PC-3 (cell line): ENCODE measurements at regions of chr7 and their contacts with region 1.

Region 1: GRCh38 chr7:123929107-123929506 is 4.1 kb downstream of the SPAM1 start:
- DNase-seq: peak; percentile 95
- ATAC-seq: peak; percentile 96
- H3K4me3 ChIP-seq: no peak overlapping the region
- H3K27ac ChIP-seq: peak overlapping the region; percentile 55
- H3K4me1 ChIP-seq: peaks cover 14% of the 10 kb centered on the region
- H3K27me3 ChIP-seq: no peaks in the 10 kb centered on the region
- CTCF ChIP-seq: no peak

Region 2: GRCh38 chr7:123901044-123901443 is 28.1 kb before region 1 on chr7:
- CTCF ChIA-PET with region 1: no interaction called
- POLR2A ChIA-PET with region 1: no interaction called
- intact Hi-C with region 1: loop called (anchors 1 kb)
- DNase-seq: peak; percentile 69
- ATAC-seq: peak; percentile 97
- H3K4me3 ChIP-seq: no peak overlapping the region
- H3K27ac ChIP-seq: no peak overlapping the region
- H3K4me1 ChIP-seq: peaks cover 5% of the 10 kb centered on the region; the same call in 1 of the 2 replicates
- H3K27me3 ChIP-seq: no peaks in the 10 kb centered on the region
- CTCF ChIP-seq: no peak

Region 3: DNA sequence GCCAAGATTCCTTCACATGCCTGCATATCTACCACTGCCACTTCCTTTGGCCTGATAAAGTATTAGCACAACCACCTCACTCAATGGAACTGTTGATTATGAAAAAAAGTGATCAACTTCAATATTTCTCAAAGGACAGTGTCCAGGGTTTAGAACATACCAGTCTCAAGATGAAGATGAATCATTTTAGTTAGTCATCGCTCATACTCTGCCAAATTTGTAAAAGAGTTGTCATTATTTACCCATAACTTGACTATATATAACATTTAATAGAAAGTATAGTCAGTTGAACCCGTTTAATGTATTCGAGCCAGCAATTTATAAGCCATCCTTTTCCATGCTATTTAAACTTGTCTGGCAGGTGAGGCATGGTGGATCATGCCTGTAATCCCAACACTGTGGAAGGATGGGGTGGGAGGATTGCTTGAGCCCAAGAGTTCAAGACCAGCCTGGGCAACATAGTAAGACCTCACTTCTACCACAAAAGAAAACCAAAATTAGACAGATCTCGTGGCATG is 29.1 kb after region 1 on chr7:
- CTCF ChIA-PET with region 1: no interaction called
- POLR2A ChIA-PET with region 1: no interaction called
- intact Hi-C with region 1: loop called (anchors 2 kb)
- DNase-seq: peak; percentile 92
- ATAC-seq: peak; percentile 98
- H3K4me3 ChIP-seq: no peak overlapping the region
- H3K27ac ChIP-seq: peak overlapping the region; percentile 40; the same call in 1 of the 2 replicates
- H3K4me1 ChIP-seq: peaks cover 7% of the 10 kb centered on the region; the same call in 1 of the 2 replicates
- H3K27me3 ChIP-seq: no peaks in the 10 kb centered on the region
- CTCF ChIP-seq: no peak

Region 4: DNA sequence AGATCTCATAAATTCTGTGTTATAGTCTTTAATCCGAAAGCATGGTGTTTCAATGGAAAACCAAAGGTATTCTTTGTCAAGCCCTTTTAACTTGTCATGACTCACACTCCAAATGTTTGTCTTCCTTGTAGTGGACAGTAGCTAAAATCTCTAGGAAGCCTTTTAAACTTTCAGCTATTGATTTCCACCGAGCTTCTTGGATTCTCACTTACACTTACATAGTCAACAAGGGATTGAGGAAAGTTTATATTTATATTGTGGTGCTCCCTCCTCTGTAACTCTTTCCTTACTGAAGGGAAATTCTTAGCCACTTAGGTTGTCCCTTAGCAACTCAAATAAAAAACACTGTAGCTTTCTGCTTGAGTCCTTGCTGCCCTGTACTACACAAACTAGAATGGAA is 867.7 kb after region 1 on chr7:
- CTCF ChIA-PET with region 1: no interaction called
- POLR2A ChIA-PET with region 1: no interaction called
- intact Hi-C with region 1: loop called (anchors 5 kb)
- DNase-seq: peak; percentile 78
- ATAC-seq: peak; percentile 88
- H3K4me3 ChIP-seq: peak overlapping the region; percentile 19; the same call in 1 of the 2 replicates
- H3K27ac ChIP-seq: peak overlapping the region; percentile 23; the same call in 1 of the 2 replicates
- H3K4me1 ChIP-seq: peaks cover 25% of the 10 kb centered on the region
- H3K27me3 ChIP-seq: no peaks in the 10 kb centered on the region
- CTCF ChIP-seq: no peak